ENCODE measurements at regions of chr7 and their contacts with region 1.

Region 1: DNA sequence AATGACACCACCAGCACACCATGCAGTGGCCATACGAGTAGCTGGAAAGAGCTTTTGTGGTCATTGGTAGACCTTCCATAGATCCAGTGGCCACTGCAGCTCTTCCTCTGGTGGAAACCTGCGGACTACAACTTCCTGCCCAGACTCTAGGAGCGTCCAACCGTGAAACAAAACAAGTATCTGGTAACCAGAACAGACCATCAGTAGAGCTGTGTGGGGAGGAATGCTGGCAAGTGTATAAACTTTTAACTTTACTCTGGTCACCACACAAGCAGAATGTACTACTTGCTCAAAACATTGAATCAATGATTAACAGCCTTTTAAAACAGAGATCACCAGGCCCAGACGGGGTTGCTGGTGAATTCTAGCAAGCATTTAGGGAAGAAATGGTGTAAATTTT is 154.7 kb upstream of the DGKB start:
- DNase-seq: no peak

Region 2: GRCh38 chr7:14999331-14999730 is 57.9 kb before region 1 on chr7:
- in situ Hi-C with region 1: loop called (anchors 5 kb)
- DNase-seq: no peak

Region 3: DNA sequence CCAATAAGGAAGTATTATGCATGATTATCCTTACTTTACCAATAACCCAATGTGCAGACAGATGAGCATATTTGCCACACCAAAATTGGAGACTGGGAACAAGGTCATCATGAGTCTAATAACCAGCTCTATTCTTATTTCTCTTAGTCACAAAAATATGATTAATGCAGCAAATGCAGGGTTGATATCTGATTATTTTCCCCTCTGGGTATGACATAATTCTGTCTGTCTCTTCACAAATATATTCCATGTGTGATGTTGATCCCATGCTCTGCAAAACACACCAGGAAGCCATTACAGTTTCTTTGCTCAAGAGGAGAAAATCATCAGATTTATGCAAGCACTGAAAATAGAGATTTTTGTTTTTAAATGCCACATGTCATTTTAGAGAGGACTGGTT is 41.8 kb after region 1 on chr7:
- in situ Hi-C with region 1: no loop called
- DNase-seq: no peak

Measured in G401 (cell line).